H1 (cell line): ENCODE measurements at regions of chr13 and their contacts with region 1.

Region 1: DNA sequence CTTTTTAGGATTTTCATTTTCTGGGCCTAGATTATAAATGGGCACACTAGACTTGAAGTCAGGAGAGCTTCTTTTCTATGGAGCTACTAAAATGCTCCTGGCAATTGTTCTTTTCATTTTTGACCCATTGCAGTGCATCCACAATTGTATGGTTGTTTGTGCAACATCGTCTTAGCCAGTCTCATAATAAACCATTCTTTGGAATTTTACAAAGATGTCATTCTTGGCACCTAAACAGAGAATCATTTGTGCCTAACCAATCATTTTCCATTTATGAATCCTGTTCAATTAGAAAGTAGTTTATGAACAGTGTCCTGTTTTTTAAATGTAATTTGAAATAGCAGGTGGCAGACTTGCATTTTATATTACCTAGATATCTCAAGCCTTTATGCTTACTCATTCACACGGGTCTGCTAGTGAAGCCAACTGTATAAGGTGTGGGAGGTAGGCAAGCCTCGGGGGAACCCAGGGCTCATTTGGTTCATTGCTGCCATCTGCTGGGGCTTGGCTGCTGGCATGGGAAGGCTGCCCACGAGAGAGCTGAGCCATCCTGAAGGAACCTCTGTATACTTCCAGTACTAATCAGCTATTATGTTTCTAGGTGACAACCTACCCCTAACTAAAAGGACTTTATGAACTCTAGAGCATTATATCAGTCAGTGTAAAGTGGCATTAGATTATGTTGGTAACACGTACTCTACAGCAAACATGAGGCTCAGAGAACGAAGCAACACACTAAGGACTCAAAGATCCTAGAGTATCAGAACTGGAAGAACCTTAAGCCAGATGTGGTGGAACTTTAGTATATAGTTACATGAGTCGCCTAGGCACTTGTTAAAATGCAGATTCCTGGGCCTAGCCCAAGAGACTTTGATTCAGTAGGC is 60.0 kb downstream of the TPT1 start:
- DNase-seq: peak; percentile 27 to 72
- H3K4me3 ChIP-seq: no peak overlapping the region
- H3K27ac ChIP-seq: no peak overlapping the region
- H3K4me1 ChIP-seq: no peaks in the 10 kb centered on the region
- H3K27me3 ChIP-seq: no peaks in the 10 kb centered on the region
- CTCF ChIP-seq: peak; percentile 78 to 86 (median 79)
- EP300 ChIP-seq: no peak
- POLR2A ChIP-seq: no peak
- RAD21 ChIP-seq: peak; percentile 92 to 94

Region 2: DNA sequence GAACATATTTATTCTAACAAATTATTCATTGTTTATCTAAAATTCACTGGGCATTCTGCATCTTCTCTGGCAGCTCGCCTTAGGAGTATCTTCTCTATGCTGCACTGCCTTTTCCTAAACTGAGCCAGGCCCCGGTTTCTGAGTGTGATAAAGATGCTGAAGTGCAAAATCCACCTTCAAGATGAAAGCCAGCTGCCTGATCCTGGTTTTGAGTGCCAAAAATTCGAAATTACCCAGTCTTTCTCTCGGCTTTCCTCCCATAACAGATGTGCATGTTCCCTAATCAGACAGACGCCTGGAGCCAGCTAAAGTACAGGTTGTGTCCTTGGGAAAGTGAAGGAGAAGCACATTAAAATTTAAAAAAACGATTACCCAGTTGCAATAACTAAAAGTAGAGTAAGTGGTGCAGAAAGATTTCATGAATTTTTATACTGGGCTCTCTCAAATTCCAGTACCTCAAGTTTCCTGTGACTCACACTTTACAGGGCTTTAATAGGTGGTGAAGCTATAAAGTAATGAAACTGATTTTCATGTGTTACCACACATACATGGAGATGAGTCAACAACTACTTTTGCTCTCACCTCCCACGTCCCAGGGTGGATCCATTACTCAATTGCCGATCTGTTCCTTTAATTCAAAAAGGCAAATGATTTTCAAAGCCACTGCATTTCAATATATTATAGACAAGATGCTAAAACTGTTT is 225.6 kb before region 1 on chr13:
- CTCF ChIA-PET with region 1: interaction called, 87 read pairs
- POLR2A ChIA-PET with region 1: no interaction called
- DNase-seq: no peak
- H3K4me3 ChIP-seq: no peak overlapping the region
- H3K27ac ChIP-seq: no peak overlapping the region
- H3K4me1 ChIP-seq: no peaks in the 10 kb centered on the region
- H3K27me3 ChIP-seq: no peaks in the 10 kb centered on the region
- CTCF ChIP-seq: no peak
- EP300 ChIP-seq: no peak
- POLR2A ChIP-seq: no peak
- RAD21 ChIP-seq: no peak

Region 3: DNA sequence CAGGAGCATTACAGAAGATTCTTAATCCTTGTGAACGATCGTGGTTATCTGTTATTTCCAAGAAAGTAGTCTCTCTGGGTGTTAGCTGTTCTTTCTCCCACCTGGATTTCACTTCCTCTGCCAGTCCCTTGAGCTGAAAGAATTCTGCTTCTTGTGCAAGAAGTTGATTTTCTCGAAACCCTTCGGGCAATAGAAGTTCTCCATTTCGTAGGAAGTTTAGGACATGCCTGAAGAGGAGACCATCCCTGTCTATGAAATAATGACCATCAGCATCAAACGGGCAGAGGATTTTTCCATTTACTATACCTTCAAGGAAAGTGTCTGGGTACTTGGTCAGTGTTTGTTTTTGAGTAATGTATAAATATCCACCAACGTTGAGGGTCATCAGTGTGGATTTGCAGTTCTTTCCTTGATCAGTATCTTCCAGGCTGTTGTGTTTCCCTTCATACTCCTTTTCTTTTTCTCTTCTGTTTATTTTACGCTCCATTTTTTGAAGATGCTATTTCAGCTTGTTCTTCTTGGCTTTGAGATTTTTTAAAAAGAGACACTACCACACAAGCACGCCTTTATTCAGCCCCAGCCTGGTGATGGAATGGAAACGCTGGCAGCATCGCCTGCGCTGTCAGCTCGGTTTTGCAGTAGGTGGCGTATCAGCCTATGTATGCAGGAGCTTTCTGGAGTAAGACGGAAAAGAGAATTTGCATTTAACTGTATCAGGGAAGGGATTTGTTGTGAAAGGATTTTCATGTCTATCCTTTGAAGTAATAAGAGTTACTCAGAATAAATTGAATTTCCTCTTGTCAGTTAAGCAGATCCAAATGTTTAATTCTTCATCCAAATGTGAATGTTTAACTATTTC is 86.7 kb before region 1 on chr13:
- CTCF ChIA-PET with region 1: interaction called, 22 read pairs
- POLR2A ChIA-PET with region 1: no interaction called
- DNase-seq: peak in 1 of 2 experiments; percentile 9
- H3K4me3 ChIP-seq: no peak overlapping the region
- H3K27ac ChIP-seq: no peak overlapping the region
- H3K4me1 ChIP-seq: no peaks in the 10 kb centered on the region
- H3K27me3 ChIP-seq: no peaks in the 10 kb centered on the region
- CTCF ChIP-seq: peak; percentile 52 to 71 (median 60)
- EP300 ChIP-seq: no peak
- POLR2A ChIP-seq: no peak
- RAD21 ChIP-seq: peak; percentile 66 to 74

Region 4: GRCh38 chr13:45222516-45222915 is 58.5 kb before region 1 on chr13:
- CTCF ChIA-PET with region 1: no interaction called
- POLR2A ChIA-PET with region 1: no interaction called
- DNase-seq: no peak
- H3K4me3 ChIP-seq: no peak overlapping the region
- H3K27ac ChIP-seq: no peak overlapping the region
- H3K4me1 ChIP-seq: peaks cover 0 to 5% (median 4%) of the 10 kb centered on the region in 4 experiments; a peak in 5 of 7 replicates
- H3K27me3 ChIP-seq: no peaks in the 10 kb centered on the region
- CTCF ChIP-seq: no peak
- EP300 ChIP-seq: no peak
- POLR2A ChIP-seq: no peak
- RAD21 ChIP-seq: no peak

Region 5: GRCh38 chr13:45292176-45292575 is 11.2 kb after region 1 on chr13:
- CTCF ChIA-PET with region 1: interaction called, 24 read pairs
- POLR2A ChIA-PET with region 1: no interaction called
- DNase-seq: no peak
- H3K4me3 ChIP-seq: no peak overlapping the region
- H3K27ac ChIP-seq: no peak overlapping the region
- H3K4me1 ChIP-seq: no peaks in the 10 kb centered on the region
- H3K27me3 ChIP-seq: no peaks in the 10 kb centered on the region
- CTCF ChIP-seq: no peak
- EP300 ChIP-seq: no peak
- POLR2A ChIP-seq: no peak
- RAD21 ChIP-seq: no peak

Region 6: GRCh38 chr13:45310341-45311125 is 29.5 kb after region 1 on chr13:
- CTCF ChIA-PET with region 1: interaction called, 16 read pairs
- POLR2A ChIA-PET with region 1: interaction called, 3 read pairs
- DNase-seq: no peak
- H3K4me3 ChIP-seq: peak overlapping the region; percentile 9 to 65 (median 44); a peak in 7 of 8 replicates
- H3K27ac ChIP-seq: no peak overlapping the region
- H3K4me1 ChIP-seq: peaks cover 0 to 17% (median 12%) of the 10 kb centered on the region in 4 experiments
- H3K27me3 ChIP-seq: no peaks in the 10 kb centered on the region
- CTCF ChIP-seq: no peak
- EP300 ChIP-seq: no peak
- POLR2A ChIP-seq: no peak
- RAD21 ChIP-seq: no peak